AG04449 (cell line): ENCODE measurements at regions of chr5 and their contacts with region 1.

Region 1: GRCh38 chr5:154467655-154468354 is 10.2 kb downstream of the HAND1 start:
- DNase-seq: no peak
- H3K4me3 ChIP-seq: no peak overlapping the region
- CTCF ChIP-seq: peak; percentile 92

Region 2: GRCh38 chr5:154072414-154073171 is 395.2 kb before region 1 on chr5:
- CTCF ChIA-PET with region 1: interaction called, 34 read pairs
- POLR2A ChIA-PET with region 1: no interaction called
- DNase-seq: no peak
- H3K4me3 ChIP-seq: no peak overlapping the region
- CTCF ChIP-seq: peak; percentile 92

Region 3: DNA sequence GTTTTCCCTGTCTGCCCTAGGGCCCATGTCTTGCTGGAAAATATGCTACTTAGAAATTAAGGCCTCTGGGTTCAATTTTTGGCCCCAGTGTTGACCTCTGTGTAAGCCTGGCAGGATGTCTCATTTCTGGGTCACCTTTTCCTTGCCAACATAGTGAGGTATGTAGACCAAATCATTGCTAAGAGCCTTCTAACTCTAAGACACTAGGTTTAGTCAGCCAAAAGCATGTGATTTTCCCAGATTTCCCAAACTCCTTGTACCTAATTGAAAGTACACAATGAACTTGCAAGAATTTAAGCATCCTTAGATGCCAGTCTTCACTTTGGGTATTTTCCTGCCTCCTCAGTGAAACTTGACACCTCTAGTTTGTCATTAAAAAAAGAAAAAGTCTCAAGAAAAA is 200.3 kb before region 1 on chr5:
- CTCF ChIA-PET with region 1: no interaction called
- POLR2A ChIA-PET with region 1: no interaction called
- DNase-seq: no peak
- H3K4me3 ChIP-seq: no peak overlapping the region
- CTCF ChIP-seq: no peak

Region 4: GRCh38 chr5:154395407-154396258 is 72.2 kb before region 1 on chr5:
- CTCF ChIA-PET with region 1: no interaction called
- POLR2A ChIA-PET with region 1: no interaction called
- DNase-seq: no peak
- H3K4me3 ChIP-seq: no peak overlapping the region
- CTCF ChIP-seq: no peak

Region 5: DNA sequence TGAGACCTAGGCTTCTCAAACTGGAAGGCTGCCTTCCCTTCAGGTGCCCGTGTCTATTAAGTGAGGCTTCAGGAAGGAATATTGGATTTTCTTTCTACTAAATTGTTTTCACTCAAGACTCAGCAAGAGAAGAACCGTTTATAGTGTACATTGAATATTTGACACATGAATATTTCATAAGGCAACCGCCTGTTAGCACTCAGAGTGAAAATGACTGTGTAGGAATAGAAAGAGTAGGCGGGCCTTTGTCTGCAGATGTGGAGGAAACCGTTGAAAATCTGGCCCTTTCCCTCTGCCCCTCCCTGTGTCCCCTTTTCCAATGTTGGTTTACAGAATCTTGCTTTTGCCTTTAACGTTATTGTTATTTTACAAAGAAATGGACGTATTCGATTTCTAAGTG is 15.8 kb before region 1 on chr5:
- CTCF ChIA-PET with region 1: interaction called, 47 read pairs
- POLR2A ChIA-PET with region 1: no interaction called
- DNase-seq: no peak
- H3K4me3 ChIP-seq: no peak overlapping the region
- CTCF ChIP-seq: no peak

Region 6: DNA sequence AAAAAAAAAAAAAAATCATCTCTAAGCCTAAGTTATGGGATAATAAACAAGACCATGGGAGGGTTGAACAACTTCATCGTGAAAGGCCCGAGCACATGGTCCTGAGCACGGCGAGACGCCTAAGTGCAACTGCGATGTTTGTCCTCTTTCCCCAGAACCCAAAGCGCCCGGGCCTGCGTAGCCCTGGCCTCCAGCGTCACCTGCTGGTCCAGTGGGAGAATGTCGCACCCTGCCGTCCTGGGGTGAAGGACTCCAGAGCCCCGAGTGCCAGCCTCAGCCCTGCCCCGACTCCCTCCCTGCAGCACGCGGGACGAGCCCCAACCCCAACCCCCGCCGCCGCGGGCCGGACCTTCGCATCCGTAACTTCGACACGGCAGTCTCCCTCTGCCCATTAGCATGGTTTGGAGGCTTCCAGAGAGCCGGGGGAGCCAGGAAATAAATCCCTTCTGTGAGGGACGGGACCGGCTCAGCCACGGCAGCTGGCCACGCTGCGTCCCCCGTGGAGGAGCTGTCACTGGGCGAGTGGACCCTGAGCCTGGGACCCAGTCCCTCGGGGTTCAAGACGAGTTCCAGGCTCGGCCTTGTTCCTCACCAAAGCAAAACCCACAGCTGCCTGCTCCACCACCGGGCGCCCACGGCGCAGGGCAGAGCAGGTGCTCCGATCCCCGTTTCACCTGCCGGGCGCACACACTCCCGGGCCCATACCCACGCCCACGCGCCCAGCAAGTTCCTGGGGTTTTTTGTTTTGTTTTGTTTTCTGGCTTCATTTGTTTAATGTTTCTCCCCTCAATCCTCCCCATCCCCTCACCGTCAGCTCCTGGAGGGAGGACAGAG is 142.7 kb after region 1 on chr5:
- CTCF ChIA-PET with region 1: interaction called, 228 read pairs
- POLR2A ChIA-PET with region 1: no interaction called
- DNase-seq: no peak
- H3K4me3 ChIP-seq: peak overlapping the region; percentile 36
- CTCF ChIP-seq: peak; percentile 98

Region 7: GRCh38 chr5:154647114-154647760 is 179.4 kb after region 1 on chr5:
- CTCF ChIA-PET with region 1: interaction called, 16 read pairs
- POLR2A ChIA-PET with region 1: no interaction called
- DNase-seq: no peak
- H3K4me3 ChIP-seq: peak overlapping the region; percentile 29
- CTCF ChIP-seq: no peak

Region 8: GRCh38 chr5:154811653-154812365 is 344.0 kb after region 1 on chr5:
- CTCF ChIA-PET with region 1: no interaction called
- POLR2A ChIA-PET with region 1: no interaction called
- DNase-seq: no peak
- H3K4me3 ChIP-seq: no peak overlapping the region
- CTCF ChIP-seq: peak; percentile 77